Activated CD4-positive, alpha-beta T cell treated with anti-CD3 and anti-CD28 coated beads, Interleukin-2, amount 10 ng/mL, durations not matched to agents 24 days and 14 days (primary cell): ENCODE measurements at regions of chr13 and their contacts with region 1.

Region 1: DNA sequence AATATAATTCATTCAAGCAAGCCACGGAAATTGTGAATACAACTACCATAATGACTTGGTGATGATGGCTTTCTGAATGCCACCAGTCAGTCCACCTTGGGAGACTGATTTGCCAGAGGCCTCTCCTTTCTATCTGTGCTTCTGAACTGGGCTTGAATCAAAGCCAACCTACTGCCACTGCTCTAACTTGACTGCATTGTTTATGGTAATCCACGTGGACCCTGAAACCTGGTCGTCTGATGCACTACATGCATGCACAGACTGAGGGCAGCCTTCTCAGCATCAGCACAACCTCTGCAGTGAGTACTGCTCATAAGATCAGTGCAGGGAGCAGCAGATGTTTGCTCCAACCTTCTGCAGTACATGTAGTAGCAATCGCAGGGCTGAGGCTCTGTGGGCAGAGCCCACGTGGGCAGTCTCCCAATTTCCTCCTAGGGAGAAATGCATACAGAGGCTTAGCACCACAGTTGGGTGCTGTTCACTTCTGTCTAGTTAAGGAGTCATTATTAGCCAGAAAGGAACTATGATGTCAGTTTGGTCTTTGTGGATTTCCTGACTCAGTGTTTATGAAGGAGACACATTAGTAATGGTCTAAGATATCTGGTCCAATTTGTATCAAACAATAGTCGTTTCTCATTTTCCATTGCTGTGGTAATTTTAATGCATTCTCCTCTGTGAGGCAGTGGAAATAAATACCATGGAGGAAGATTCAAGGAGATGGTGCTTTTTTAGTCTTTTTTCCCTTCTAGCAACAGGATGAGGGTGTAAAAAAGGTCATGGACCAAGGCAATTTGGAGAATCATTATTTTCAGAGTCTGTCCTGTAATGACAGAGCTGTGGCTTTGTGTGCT is 82.5 kb downstream of the AKAP11 start:
- DNase-seq: peak; percentile 80
- H3K4me3 Mint-ChIP-seq: peak overlapping the region; percentile 77
- H3K27ac Mint-ChIP-seq: peak overlapping the region; percentile 99
- H3K4me1 Mint-ChIP-seq: peaks cover 54% of the 10 kb centered on the region
- H3K27me3 Mint-ChIP-seq: no peaks in the 10 kb centered on the region

Region 2: DNA sequence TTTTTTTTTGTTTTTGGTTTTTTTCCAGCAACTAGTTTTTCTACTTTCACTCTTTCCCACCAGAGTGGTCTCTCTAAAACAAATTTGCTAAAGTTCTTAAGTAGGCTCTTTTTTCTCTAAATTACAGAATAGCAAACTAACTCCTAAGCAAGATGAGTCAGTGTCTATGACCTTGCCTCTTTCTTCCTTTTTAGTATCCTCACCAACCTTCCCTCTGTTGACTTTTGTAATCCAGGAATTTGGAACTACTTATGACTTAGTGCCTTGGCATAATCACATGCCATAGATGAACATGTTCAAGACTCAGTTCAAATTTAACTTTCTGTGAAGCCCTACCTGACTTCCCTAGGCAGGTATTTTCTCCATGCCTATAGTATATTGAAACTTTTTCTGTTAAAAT is 114.8 kb before region 1 on chr13:
- intact Hi-C with region 1: no loop called
- DNase-seq: no peak
- H3K4me3 Mint-ChIP-seq: no peak overlapping the region
- H3K27ac Mint-ChIP-seq: no peak overlapping the region
- H3K4me1 Mint-ChIP-seq: no peaks in the 10 kb centered on the region
- H3K27me3 Mint-ChIP-seq: no peaks in the 10 kb centered on the region

Region 3: GRCh38 chr13:42369071-42369797 is 14.8 kb after region 1 on chr13:
- intact Hi-C with region 1: loop called (anchors 1 kb)
- DNase-seq: no peak
- H3K4me3 Mint-ChIP-seq: peak overlapping the region; percentile 3
- H3K27ac Mint-ChIP-seq: peak overlapping the region; percentile 64
- H3K4me1 Mint-ChIP-seq: peaks cover 46% of the 10 kb centered on the region
- H3K27me3 Mint-ChIP-seq: no peaks in the 10 kb centered on the region

Region 4: DNA sequence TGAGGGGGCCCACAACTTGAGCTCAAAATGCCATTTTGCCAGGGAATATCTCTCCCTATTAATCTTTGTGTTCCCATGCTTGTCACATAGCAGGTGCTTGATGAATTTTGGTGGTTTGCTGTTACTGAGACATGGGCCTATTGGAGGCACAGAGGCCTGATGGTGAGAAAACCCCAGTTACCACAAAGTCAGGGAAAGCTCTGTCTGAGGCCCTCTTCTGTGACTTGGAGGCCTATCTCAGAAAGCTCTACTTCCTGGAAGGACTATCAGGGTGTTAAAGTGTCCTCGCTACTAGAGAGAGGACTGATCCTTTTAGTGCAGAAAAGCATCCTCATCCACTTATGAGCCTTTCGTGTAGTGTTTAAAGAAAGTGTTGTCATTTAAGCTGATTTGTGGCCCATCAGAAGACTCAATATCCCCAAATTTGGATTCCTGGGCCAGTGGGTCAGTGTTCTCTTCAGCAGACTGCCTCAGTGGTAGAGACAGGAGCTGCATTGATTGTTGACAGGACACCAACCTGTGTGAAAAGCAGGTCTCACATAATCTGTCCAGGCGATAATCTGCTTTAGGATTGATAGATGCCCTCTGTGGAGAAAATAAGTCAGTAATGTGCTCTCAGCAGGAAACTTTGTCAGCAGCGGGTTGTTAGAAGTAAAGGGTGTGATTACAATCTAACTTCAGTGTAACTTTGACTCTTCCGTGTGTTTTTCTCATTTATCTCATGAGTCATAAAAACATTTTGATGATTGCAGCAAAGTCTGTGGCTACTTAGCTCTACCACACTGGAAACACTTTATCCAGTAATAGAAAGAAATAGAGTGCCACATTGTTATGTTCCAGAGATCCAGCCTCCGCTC is 38.5 kb after region 1 on chr13:
- intact Hi-C with region 1: loop called (anchors 1 kb)
- DNase-seq: peak; percentile 86
- H3K4me3 Mint-ChIP-seq: peak overlapping the region; percentile 91
- H3K27ac Mint-ChIP-seq: peak overlapping the region; percentile 97
- H3K4me1 Mint-ChIP-seq: peaks cover 76% of the 10 kb centered on the region
- H3K27me3 Mint-ChIP-seq: no peaks in the 10 kb centered on the region